ENCODE measurements at regions of chr12 and their contacts with region 1.

Region 1: GRCh38 chr12:107607464-107608392 is 77.9 kb upstream of the PWP1 start:
- DNase-seq: peak; percentile 70
- ATAC-seq: peak; percentile 79
- H3K4me3 ChIP-seq: no peak overlapping the region
- H3K27ac ChIP-seq: no peak overlapping the region
- H3K4me1 ChIP-seq: no peaks in the 10 kb centered on the region; the same call in 1 of the 2 replicates
- H3K27me3 ChIP-seq: no peaks in the 10 kb centered on the region
- CTCF ChIP-seq: peak; percentile 93
- POLR2A ChIP-seq: no peak
- RAD21 ChIP-seq: peak; percentile 96

Region 2: DNA sequence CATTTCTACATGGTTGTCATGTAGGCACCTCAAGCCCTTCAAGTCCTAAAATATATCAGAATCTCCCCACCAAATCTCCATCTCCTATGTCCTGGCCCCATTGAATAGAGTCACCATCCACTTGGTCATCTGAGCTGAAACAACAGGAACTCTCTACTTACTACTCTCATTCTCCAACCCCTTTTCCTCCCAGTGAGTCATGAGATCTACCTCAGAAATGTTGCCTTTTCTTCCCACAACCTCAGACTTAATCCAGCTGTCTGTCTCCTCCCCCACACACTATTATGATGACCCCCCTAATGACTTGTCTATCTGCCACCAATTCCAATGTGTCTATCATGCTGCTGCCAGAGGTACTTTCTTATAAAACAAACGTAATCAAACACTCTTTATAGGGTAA is 724.3 kb before region 1 on chr12:
- CTCF ChIA-PET with region 1: no interaction called
- POLR2A ChIA-PET with region 1: no interaction called
- dilution Hi-C with region 1: no loop called
- in situ Hi-C with region 1: no loop called
- intact Hi-C with region 1: no loop called
- DNase-seq: peak; percentile 80
- ATAC-seq: peak; percentile 61
- H3K4me3 ChIP-seq: no peak overlapping the region
- H3K27ac ChIP-seq: no peak overlapping the region
- H3K4me1 ChIP-seq: peaks cover 6% of the 10 kb centered on the region
- H3K27me3 ChIP-seq: no peaks in the 10 kb centered on the region
- CTCF ChIP-seq: no peak
- POLR2A ChIP-seq: no peak
- RAD21 ChIP-seq: no peak

Region 3: GRCh38 chr12:107093417-107094182 is 514.1 kb before region 1 on chr12 and contains the start of gene CRY1:
- CTCF ChIA-PET with region 1: interaction called, 4 read pairs
- POLR2A ChIA-PET with region 1: no interaction called
- dilution Hi-C with region 1: no loop called
- in situ Hi-C with region 1: no loop called
- intact Hi-C with region 1: loop called (anchors 1 kb)
- DNase-seq: peak; percentile 94
- ATAC-seq: peak; percentile 84
- H3K4me3 ChIP-seq: peak within 1 kb of the TSS; percentile 74
- H3K27ac ChIP-seq: peak within 1 kb of the TSS; percentile 87
- H3K4me1 ChIP-seq: no peaks in the 10 kb centered on the region; the same call in 1 of the 2 replicates
- H3K27me3 ChIP-seq: no peaks in the 10 kb centered on the region
- CTCF ChIP-seq: no peak
- POLR2A ChIP-seq: peak; percentile 97
- RAD21 ChIP-seq: no peak
- total RNA-seq, gene CRY1: 5.9 and 9.7 TPM in 2 replicates

Region 4: DNA sequence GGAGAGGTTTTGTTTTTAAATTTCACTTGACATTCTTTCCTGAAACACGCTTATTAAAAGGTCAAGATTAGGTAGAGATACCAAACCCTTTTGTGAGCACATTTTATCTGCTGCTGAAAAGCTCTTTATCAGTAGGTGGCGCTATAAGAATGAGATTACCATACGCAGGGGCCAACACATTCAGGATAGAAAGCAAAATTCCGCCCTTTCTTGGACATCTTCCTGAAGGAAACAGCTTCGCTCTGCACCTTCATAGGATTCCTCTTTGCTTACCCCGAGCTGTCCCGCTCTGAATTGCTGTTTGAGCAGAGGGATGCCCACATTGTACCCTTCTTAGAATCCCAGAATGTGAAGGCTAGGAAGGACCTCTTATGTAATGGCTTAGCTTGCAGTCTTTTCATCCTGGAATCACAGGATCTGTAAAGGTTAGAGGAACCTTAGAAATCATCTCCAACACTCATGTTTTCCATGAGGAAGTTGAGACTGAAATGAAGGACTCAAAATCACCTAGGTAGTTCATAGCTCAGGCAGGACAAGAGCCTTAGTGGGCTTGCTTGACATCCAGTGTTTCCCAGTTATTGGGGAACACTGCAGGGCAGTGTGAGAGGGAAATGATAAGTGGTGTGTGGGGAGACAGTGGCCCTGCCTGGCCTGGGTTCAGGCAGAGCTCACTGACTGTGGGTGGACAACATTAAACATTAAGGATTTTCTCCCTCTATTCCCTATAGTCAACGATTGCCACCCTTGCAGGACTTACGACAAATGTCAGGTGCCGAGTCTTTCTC is 475.7 kb before region 1 on chr12:
- CTCF ChIA-PET with region 1: interaction called, 85 read pairs
- POLR2A ChIA-PET with region 1: no interaction called
- dilution Hi-C with region 1: no loop called
- in situ Hi-C with region 1: loop called (anchors 5 kb)
- intact Hi-C with region 1: loop called (anchors 1 kb)
- DNase-seq: peak; percentile 68
- ATAC-seq: peak; percentile 94
- H3K4me3 ChIP-seq: no peak overlapping the region
- H3K27ac ChIP-seq: no peak overlapping the region
- H3K4me1 ChIP-seq: no peaks in the 10 kb centered on the region
- H3K27me3 ChIP-seq: no peaks in the 10 kb centered on the region
- CTCF ChIP-seq: peak; percentile 97
- POLR2A ChIP-seq: no peak
- RAD21 ChIP-seq: peak; percentile 97

Region 5: GRCh38 chr12:107402041-107403022 is 205.4 kb before region 1 on chr12:
- CTCF ChIA-PET with region 1: interaction called, 5 read pairs
- POLR2A ChIA-PET with region 1: no interaction called
- dilution Hi-C with region 1: no loop called
- in situ Hi-C with region 1: no loop called
- intact Hi-C with region 1: loop called (anchors 1 kb)
- DNase-seq: peak; percentile 62
- ATAC-seq: peak; percentile 66; the same call in 1 of the 2 replicates
- H3K4me3 ChIP-seq: no peak overlapping the region
- H3K27ac ChIP-seq: no peak overlapping the region
- H3K4me1 ChIP-seq: peaks cover 6% of the 10 kb centered on the region
- H3K27me3 ChIP-seq: no peaks in the 10 kb centered on the region
- CTCF ChIP-seq: peak; percentile 72
- POLR2A ChIP-seq: no peak
- RAD21 ChIP-seq: peak; percentile 77

Region 6: DNA sequence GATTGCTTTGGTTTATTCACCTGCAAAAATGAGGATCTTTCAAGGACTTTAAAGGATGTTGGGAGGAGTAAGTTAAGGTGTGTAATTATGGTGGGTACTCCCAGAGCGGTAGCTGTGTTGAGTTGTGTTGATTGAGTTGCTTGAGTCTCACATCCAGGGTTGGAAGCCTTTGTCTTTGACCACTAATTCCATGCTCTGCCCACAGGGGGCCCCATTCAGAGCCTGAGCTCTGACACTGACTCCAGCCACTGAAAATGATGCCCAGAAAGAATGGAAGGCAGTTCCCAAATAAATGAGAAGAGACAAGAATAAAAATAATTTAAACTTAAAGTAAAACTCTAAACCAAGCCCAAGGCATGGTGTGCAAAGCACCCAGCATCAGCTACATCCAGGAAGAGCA is 159.5 kb before region 1 on chr12:
- CTCF ChIA-PET with region 1: no interaction called
- POLR2A ChIA-PET with region 1: no interaction called
- dilution Hi-C with region 1: no loop called
- in situ Hi-C with region 1: no loop called
- intact Hi-C with region 1: loop called (anchors 5 kb)
- DNase-seq: peak; percentile 5
- ATAC-seq: no peak
- H3K4me3 ChIP-seq: no peak overlapping the region
- H3K27ac ChIP-seq: no peak overlapping the region
- H3K4me1 ChIP-seq: no peaks in the 10 kb centered on the region; the same call in none of the 2 replicates
- H3K27me3 ChIP-seq: no peaks in the 10 kb centered on the region
- CTCF ChIP-seq: peak; percentile 45
- POLR2A ChIP-seq: no peak
- RAD21 ChIP-seq: peak; percentile 36

Region 7: DNA sequence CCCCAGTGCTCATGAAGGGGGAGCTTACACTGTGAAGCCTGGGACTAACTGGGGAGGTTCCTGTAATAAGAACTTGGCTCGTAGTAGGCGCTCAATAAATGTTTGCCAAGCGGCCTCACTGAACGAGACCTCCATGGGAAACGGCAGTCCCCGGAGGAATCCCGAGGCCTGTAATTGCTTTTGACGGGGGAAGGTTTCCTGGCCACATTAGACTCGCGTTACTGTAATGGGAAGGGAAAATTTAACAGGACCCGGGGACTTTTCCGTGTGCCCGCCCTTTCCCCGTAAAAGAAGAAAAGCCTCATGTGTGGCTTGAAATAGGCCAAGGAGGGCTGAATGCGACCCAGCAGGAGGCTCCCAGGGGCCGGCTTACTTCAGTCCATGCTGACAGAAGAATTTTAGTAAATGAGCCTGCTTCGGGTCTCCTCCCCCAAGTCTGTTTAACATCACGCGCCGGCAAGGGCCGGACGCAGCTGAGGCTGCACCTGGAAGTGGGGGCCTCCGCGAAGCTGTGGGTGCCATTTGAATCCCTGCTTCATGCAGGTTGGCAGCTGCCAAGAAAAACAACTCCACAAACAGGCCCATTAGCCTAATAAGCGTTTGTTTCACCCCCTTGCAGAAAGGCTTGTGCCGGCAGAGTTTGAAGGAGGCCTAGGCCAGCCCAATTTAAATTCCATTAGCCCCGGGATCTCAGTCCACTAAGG is 38.1 kb after region 1 on chr12:
- CTCF ChIA-PET with region 1: no interaction called
- POLR2A ChIA-PET with region 1: no interaction called
- dilution Hi-C with region 1: no loop called
- in situ Hi-C with region 1: no loop called
- intact Hi-C with region 1: no loop called
- DNase-seq: no peak
- ATAC-seq: no peak
- H3K4me3 ChIP-seq: no peak overlapping the region
- H3K27ac ChIP-seq: no peak overlapping the region
- H3K4me1 ChIP-seq: no peaks in the 10 kb centered on the region
- H3K27me3 ChIP-seq: no peaks in the 10 kb centered on the region
- CTCF ChIP-seq: no peak
- POLR2A ChIP-seq: no peak
- RAD21 ChIP-seq: no peak

Measured in IMR-90 (cell line).